OCI-LY7 (cell line): ENCODE measurements at regions of chr12 and their contacts with region 1.

Region 1: GRCh38 chr12:107884769-107885694 is 110.5 kb downstream of the ASCL4 start:
- DNase-seq: peak; percentile 68
- H3K4me3 ChIP-seq: no peak overlapping the region
- H3K27ac ChIP-seq: no peak overlapping the region
- H3K4me1 ChIP-seq: no peaks in the 10 kb centered on the region
- CTCF ChIP-seq: peak; percentile 91

Region 2: DNA sequence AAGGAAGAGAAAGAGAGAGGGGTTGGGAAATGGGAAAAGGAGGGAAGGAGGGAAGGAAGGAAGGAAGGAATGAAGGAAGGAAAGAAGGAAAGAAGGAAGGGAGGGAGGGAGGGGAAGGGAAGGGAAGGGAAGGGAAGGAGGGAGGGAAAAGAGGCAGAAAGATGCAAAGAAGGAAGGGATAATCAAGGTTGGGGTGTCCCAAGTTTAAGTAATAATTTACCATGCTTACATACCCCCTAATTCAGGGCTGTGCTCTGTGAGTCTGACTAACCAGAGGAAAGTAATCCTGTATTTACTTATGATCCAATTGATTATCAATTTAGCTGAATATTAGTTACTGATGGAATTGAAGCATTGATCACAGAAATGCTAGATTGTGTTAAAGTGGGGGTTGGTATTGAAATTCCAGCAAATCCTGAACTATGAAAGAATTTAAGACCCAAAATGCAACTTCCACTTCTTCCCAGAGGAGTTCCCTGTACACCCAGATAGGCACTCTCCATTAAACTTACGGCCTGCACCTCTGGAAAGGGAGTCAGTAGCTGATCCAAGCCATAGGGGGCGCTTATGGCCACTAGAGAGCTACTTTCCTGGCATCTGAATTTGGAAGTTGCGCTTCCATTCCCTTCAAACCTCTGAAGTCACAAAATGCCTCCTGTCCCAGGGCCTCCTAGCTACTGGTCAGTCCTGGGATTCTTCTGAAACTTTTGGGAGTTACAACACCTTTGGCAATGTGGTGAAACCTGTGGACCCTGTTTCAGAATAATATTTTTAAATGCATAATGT is 362.1 kb before region 1 on chr12:
- CTCF ChIA-PET with region 1: no interaction called
- POLR2A ChIA-PET with region 1: no interaction called
- intact Hi-C with region 1: no loop called
- DNase-seq: no peak
- H3K4me3 ChIP-seq: no peak overlapping the region
- H3K27ac ChIP-seq: no peak overlapping the region
- H3K4me1 ChIP-seq: no peaks in the 10 kb centered on the region
- CTCF ChIP-seq: peak; percentile 39; the same call in 1 of the 2 replicates

Region 3: DNA sequence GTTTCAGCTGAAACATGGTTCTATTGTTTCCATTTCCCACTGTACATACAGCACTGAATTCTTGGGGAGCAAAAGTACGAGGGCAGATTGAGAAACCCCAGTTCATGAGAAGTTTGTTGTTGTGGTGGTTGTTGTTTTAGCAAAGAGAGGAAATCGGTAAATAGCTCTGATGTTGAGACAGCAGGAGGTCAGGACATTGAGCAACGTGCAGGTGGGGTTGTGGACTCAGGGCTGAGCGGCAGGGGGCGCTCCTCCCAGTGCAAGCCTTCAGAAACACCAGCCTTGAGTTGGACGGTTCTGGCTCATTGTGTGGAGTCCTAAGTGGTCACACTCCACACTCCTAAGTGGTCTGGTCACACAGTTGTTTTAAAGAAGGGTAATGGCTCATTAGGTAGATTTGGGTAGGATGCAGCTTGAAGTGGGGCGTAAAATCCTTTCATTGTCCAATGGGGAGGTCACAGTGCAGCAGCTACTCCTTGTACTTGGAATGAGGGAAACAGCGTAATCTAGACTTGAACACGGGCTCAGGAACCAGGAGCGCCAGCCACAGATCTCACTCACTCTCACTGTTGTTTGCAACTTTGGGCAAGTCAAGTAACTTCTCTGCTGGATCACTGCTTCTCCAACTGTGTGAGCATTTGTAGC is 213.9 kb before region 1 on chr12:
- CTCF ChIA-PET with region 1: no interaction called
- POLR2A ChIA-PET with region 1: no interaction called
- intact Hi-C with region 1: loop called (anchors 1 kb)
- DNase-seq: peak; percentile 34
- H3K4me3 ChIP-seq: no peak overlapping the region
- H3K27ac ChIP-seq: no peak overlapping the region
- H3K4me1 ChIP-seq: no peaks in the 10 kb centered on the region
- CTCF ChIP-seq: peak; percentile 86